ENCODE measurements at regions of chr3 and their contacts with region 1.

Region 1: DNA sequence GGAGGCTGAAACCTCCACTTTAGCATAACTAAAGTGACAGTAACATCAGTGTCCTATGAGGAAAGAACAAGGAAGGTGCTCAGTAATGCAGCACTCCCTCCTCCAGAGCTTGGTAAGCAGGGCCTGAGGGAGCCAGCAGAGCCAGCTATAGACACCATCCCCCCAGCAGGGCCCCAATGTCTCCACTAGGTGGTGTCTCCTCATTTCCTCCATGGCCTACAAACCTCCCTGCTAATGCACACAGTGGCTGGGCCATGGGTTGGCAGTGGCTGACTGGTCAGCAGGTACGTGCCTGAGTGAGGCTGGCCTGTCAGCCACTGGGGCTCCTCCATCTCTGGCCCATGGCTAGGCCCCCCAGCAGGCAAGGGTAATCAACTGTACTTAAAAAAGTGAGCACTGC is 13.6 kb downstream of the MRPS25 start:
- DNase-seq: no peak
- ATAC-seq: peak; percentile 20
- H3K4me3 Mint-ChIP-seq: no peak overlapping the region
- H3K27ac Mint-ChIP-seq: peak overlapping the region; percentile 84
- H3K4me1 Mint-ChIP-seq: peaks cover 68% of the 10 kb centered on the region
- H3K27me3 Mint-ChIP-seq: no peaks in the 10 kb centered on the region
- CTCF ChIP-seq: no peak

Region 2: GRCh38 chr3:14988988-14989394 is 62.5 kb before region 1 on chr3:
- CTCF ChIA-PET with region 1: no interaction called
- POLR2A ChIA-PET with region 1: no interaction called
- intact Hi-C with region 1: loop called (anchors 5 kb)
- DNase-seq: peak; percentile 21
- ATAC-seq: peak; percentile 99
- H3K4me3 Mint-ChIP-seq: peak overlapping the region; percentile 45
- H3K27ac Mint-ChIP-seq: peak overlapping the region; percentile 67
- H3K4me1 Mint-ChIP-seq: peaks cover 45% of the 10 kb centered on the region
- H3K27me3 Mint-ChIP-seq: no peaks in the 10 kb centered on the region
- CTCF ChIP-seq: no peak

Region 3: DNA sequence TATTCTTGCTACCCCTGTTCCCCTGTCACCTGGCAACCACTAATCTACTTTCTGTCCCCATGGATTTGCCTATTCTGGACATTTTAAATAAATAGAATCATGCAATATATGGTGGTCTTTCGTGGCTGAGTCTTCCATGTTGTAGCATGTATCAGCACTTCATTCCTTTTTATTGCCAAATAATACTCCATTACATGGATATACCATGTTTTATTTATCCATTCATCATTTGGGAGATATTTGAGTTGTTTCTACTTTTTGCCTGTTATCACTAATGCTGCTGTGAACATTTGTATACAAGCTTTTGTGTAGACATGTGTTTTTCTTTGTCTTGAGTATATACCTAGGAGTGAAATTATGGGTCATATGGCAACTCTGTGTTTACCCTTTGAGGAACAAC is 53.6 kb before region 1 on chr3:
- CTCF ChIA-PET with region 1: no interaction called
- POLR2A ChIA-PET with region 1: interaction called, 10 read pairs
- intact Hi-C with region 1: no loop called
- DNase-seq: no peak
- ATAC-seq: no peak
- H3K4me3 Mint-ChIP-seq: no peak overlapping the region
- H3K27ac Mint-ChIP-seq: no peak overlapping the region
- H3K4me1 Mint-ChIP-seq: peaks cover 24% of the 10 kb centered on the region
- H3K27me3 Mint-ChIP-seq: no peaks in the 10 kb centered on the region
- CTCF ChIP-seq: no peak

Region 4: GRCh38 chr3:15064835-15065549 is 13.5 kb after region 1 on chr3 and contains the start of gene MRPS25:
- CTCF ChIA-PET with region 1: interaction called, 14 read pairs
- POLR2A ChIA-PET with region 1: interaction called, 62 read pairs
- intact Hi-C with region 1: loop called (anchors 1 kb)
- DNase-seq: peak; percentile 84
- ATAC-seq: peak; percentile 97
- H3K4me3 Mint-ChIP-seq: peak within 1 kb of the TSS; percentile 98
- H3K27ac Mint-ChIP-seq: peak within 1 kb of the TSS; percentile 95
- H3K4me1 Mint-ChIP-seq: peaks cover 25% of the 10 kb centered on the region
- H3K27me3 Mint-ChIP-seq: no peaks in the 10 kb centered on the region
- CTCF ChIP-seq: no peak
- total RNA-seq, gene MRPS25: 72.4 and 85.9 TPM in 2 replicates

Measured in activated B cell treated with CpG ODN at 0.5 μM for 24 hours (primary cell).